ENCODE measurements at regions of chr3 and their contacts with region 1.

Region 1: GRCh38 chr3:56655709-56656108 is 27.4 kb downstream of the TASOR start:
- DNase-seq: no peak
- ATAC-seq: no peak
- H3K4me3 ChIP-seq: no peak overlapping the region
- H3K27ac ChIP-seq: no peak overlapping the region
- H3K4me1 ChIP-seq: peaks cover 0 to 5% (median 0%) of the 10 kb centered on the region in 9 donors
- H3K27me3 ChIP-seq: no peaks in the 10 kb centered on the region
- CTCF ChIP-seq: no peak

Region 2: GRCh38 chr3:57764794-57765193 is 1109.1 kb after region 1 on chr3:
- intact Hi-C with region 1: loop called in 1 of 10 experiments (anchors 5 kb)
- DNase-seq: no peak
- ATAC-seq: no peak
- H3K4me3 ChIP-seq: no peak overlapping the region
- H3K27ac ChIP-seq: no peak overlapping the region
- H3K4me1 ChIP-seq: peaks cover 0 to 47% (median 27%) of the 10 kb centered on the region in 9 donors
- H3K27me3 ChIP-seq: no peaks in the 10 kb centered on the region
- CTCF ChIP-seq: no peak

Measured in heart right ventricle (tissue), 16 donors.